Calu3 (cell line): ENCODE measurements at regions of chr4 and their contacts with region 1.

Region 1: GRCh38 chr4:77358315-77358928 is 201.4 kb downstream of the CCNG2 start:
- DNase-seq: peak; percentile 35
- H3K4me3 Mint-ChIP-seq: no peak overlapping the region
- H3K27ac Mint-ChIP-seq: no peak overlapping the region
- H3K4me1 Mint-ChIP-seq: no peaks in the 10 kb centered on the region
- H3K27me3 Mint-ChIP-seq: peaks cover 28% of the 10 kb centered on the region
- CTCF ChIP-seq: no peak

Region 2: DNA sequence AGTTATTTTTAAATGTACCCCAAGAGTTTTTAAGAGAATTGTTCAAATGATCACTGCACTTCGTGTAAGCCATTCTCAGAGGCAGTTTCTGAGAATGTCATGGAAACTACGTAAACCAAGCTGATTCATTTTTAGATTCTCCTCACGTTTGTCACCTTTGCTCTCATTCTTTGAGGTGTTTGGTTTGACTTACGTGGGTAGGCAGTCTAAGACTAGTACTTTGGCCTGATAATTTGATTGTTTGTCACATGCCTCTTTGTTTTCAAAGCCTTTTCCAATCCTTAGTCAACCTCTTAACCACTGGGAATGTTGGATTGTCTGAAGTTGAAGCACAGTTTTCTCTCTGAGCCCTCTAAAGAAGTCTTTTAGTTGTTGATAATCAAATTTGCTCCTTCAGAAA is 398.4 kb before region 1 on chr4:
- CTCF ChIA-PET with region 1: no interaction called
- intact Hi-C with region 1: no loop called
- DNase-seq: no peak
- H3K4me3 Mint-ChIP-seq: no peak overlapping the region
- H3K27ac Mint-ChIP-seq: peak overlapping the region; percentile 39
- H3K4me1 Mint-ChIP-seq: peaks cover 26% of the 10 kb centered on the region
- H3K27me3 Mint-ChIP-seq: no peaks in the 10 kb centered on the region
- CTCF ChIP-seq: no peak

Region 3: GRCh38 chr4:77284036-77284435 is 74.4 kb before region 1 on chr4:
- CTCF ChIA-PET with region 1: no interaction called
- intact Hi-C with region 1: no loop called
- DNase-seq: no peak
- H3K4me3 Mint-ChIP-seq: no peak overlapping the region
- H3K27ac Mint-ChIP-seq: no peak overlapping the region
- H3K4me1 Mint-ChIP-seq: no peaks in the 10 kb centered on the region
- H3K27me3 Mint-ChIP-seq: peaks cover 73% of the 10 kb centered on the region
- CTCF ChIP-seq: no peak

Region 4: DNA sequence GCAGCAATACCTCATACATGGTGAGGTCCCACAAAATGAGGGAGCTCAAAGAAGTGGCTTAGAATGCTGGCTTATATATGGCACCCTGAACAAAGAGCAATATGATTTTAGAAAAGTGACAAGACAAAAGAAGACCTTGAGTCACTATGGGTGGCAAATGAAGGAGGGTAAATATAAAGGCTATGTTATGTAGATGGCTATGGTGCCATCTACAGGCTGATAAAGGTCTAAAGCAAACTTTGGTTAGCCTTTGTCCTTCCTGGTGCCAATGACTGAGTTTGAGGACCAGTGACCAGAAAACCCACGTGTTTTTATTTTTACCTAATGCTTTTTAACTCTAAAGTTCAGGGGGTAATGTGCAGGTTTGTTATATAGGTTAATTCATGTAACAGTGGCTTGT is 49.6 kb before region 1 on chr4:
- CTCF ChIA-PET with region 1: no interaction called
- intact Hi-C with region 1: loop called (anchors 10 kb)
- DNase-seq: peak; percentile 1
- H3K4me3 Mint-ChIP-seq: no peak overlapping the region
- H3K27ac Mint-ChIP-seq: no peak overlapping the region
- H3K4me1 Mint-ChIP-seq: no peaks in the 10 kb centered on the region
- H3K27me3 Mint-ChIP-seq: peaks cover 30% of the 10 kb centered on the region
- CTCF ChIP-seq: no peak